ENCODE measurements at regions of chr6 and their contacts with region 1.

Region 1: DNA sequence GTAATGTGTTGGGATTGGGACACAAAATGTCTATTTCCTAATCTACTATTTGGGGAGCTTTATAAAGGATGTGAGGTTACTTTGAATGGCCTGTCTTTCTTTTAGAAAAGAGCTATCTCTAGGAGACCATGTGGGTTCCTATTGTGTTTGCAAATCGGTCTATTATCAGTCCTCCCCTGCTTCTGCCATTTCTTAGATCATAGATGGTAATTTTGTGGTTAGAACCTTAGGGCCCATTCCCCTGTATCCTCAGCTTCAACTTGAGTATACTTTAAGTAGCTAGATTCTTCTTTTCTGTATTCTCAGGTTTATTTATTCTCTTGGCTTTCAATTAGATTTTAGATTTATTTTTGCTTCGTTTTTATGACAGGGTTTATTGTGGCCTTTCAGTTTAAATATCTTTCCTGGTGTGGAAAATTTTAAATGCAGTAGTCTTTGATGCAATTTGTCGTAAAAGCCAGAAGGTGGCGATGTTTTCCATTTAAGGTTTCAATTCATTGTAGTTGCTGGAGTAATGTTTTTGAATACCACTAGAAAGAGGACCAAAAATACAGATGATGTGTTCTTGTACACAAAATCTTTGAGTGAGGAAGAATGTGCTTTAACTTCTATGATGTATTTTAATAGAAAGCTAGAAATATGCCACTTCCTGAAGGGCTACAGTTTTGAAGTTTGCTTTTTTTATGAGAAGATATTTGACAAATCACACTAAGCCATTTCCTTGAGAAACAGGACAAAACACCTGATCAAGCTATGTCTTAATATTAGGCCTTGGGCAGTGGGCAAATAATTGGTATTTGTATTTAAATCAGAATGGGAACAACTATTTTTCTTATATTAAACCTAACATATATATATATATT is 20.3 kb downstream of the TBPL1 start:
- DNase-seq: no peak
- ATAC-seq: peak in 1 of 8 donors; percentile 58
- H3K4me3 ChIP-seq: no peak overlapping the region
- H3K27ac ChIP-seq: no peak overlapping the region
- H3K4me1 ChIP-seq: peaks cover 0 to 40% (median 25%) of the 10 kb centered on the region in 9 donors
- H3K27me3 ChIP-seq: no peaks in the 10 kb centered on the region
- CTCF ChIP-seq: peak; percentile 52 to 83 (median 77)

Region 2: GRCh38 chr6:133923938-133924593 is 49.3 kb before region 1 on chr6:
- intact Hi-C with region 1: loop called in 3 of 10 experiments (anchors 5 to 10 kb)
- DNase-seq: peak in 1 of 2 donors; percentile 75
- ATAC-seq: peak; percentile 79 to 93 (median 91)
- H3K4me3 ChIP-seq: no peak overlapping the region
- H3K27ac ChIP-seq: no peak overlapping the region
- H3K4me1 ChIP-seq: no peaks in the 10 kb centered on the region
- H3K27me3 ChIP-seq: peaks cover 0 to 22% (median 3%) of the 10 kb centered on the region in 7 donors
- CTCF ChIP-seq: peak; percentile 69 to 93 (median 87)

Region 3: DNA sequence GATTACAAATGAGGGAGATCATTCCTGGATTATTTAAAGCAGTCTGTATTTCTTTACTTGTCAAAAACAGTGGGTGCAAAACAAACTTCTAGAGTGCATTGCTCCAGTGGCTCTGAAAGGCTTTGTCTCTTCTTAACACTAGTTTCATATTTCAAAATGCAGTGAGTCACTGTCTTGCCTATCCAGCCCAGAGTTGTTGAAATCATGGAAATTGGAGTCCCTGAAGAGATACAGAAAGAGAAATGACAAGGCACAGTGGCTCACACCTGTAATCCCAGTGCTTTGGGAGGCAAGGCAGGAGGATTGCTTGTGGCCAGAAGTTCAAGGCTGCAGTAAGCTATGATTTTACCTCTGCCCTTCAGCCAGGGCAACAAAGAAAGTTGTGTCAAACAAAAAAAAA is 67.8 kb after region 1 on chr6:
- intact Hi-C with region 1: no loop called
- DNase-seq: no peak
- ATAC-seq: no peak
- H3K4me3 ChIP-seq: no peak overlapping the region
- H3K27ac ChIP-seq: no peak overlapping the region
- H3K4me1 ChIP-seq: peaks cover 0 to 16% (median 3%) of the 10 kb centered on the region in 9 donors
- H3K27me3 ChIP-seq: no peaks in the 10 kb centered on the region
- CTCF ChIP-seq: no peak

Region 4: GRCh38 chr6:134063966-134064445 is 90.7 kb after region 1 on chr6:
- intact Hi-C with region 1: loop called (anchors 1 to 5 kb)
- DNase-seq: peak in 1 of 2 donors; percentile 68
- ATAC-seq: peak; percentile 76 to 92 (median 87)
- H3K4me3 ChIP-seq: no peak overlapping the region
- H3K27ac ChIP-seq: no peak overlapping the region
- H3K4me1 ChIP-seq: peaks cover 0 to 20% (median 10%) of the 10 kb centered on the region in 9 donors
- H3K27me3 ChIP-seq: no peaks in the 10 kb centered on the region
- CTCF ChIP-seq: peak; percentile 54 to 85 (median 77)